GM10248 (cell line): ENCODE measurements at regions of chr3 and their contacts with region 1.

Region 1: GRCh38 chr3:141402476-141403171 is 34.3 kb downstream of the ZBTB38 start:
- DNase-seq: peak; percentile 43
- CTCF ChIP-seq: no peak

Region 2: GRCh38 chr3:141370065-141370533 is 32.5 kb before region 1 on chr3:
- CTCF ChIA-PET with region 1: interaction called, 17 read pairs
- POLR2A ChIA-PET with region 1: no interaction called
- DNase-seq: peak; percentile 77
- CTCF ChIP-seq: peak; percentile 50

Region 3: GRCh38 chr3:141386611-141387111 is 16.0 kb before region 1 on chr3:
- CTCF ChIA-PET with region 1: interaction called, 22 read pairs
- POLR2A ChIA-PET with region 1: no interaction called
- DNase-seq: no peak
- CTCF ChIP-seq: no peak

Region 4: DNA sequence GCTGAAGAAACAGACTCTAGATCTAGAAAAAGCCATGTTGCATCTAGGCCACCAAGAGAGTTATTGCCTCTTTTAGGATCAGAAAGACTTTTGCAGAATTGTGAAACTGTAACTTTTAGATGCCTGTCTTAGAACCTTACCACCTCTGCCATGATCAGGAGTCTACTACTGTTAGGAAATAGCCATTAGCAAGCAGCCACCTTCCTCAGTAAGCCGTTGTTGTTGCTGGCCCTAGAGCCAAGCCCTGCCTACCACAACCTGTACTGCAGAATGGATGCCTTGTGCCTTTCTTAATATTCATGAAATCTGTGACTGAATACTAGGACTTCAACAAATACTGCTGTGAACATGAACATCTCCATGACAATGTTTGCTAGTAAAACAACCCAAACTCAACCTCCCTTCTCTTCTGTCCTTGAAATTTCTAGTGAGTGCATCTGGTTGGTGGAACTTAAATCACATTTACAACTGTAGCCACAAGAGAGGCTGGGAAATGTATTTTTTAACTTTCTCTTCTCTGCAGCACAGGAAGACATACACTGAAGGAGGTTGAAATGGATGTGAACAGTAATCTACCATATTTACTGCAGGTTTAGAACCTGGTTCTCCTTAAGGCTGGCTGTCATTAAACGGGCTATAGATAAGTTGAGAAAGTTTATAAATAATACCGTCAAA is 104.9 kb after region 1 on chr3:
- CTCF ChIA-PET with region 1: no interaction called
- POLR2A ChIA-PET with region 1: no interaction called
- DNase-seq: no peak
- CTCF ChIP-seq: no peak

Region 5: DNA sequence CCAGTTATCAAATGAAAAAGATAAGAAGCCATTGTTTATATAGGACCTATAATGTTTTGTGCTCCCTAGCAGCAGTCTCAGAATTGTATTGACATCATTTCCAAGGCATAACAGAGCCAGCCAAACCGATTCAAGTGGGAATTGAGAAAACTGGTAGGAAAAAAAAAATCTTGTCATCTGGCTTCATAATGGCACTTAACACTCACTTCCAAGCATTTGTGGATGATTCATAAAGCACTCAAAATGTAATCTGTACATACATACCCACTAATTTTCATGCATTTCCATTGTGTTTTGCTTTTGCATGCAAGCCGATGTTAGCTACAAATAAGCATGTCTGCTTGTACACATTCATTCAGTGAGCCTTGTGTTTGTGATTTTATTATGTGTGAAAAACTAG is 1302.6 kb after region 1 on chr3:
- CTCF ChIA-PET with region 1: no interaction called
- POLR2A ChIA-PET with region 1: no interaction called
- DNase-seq: no peak
- CTCF ChIP-seq: no peak